ENCODE measurements at regions of chr6 and their contacts with region 1.

Region 1: DNA sequence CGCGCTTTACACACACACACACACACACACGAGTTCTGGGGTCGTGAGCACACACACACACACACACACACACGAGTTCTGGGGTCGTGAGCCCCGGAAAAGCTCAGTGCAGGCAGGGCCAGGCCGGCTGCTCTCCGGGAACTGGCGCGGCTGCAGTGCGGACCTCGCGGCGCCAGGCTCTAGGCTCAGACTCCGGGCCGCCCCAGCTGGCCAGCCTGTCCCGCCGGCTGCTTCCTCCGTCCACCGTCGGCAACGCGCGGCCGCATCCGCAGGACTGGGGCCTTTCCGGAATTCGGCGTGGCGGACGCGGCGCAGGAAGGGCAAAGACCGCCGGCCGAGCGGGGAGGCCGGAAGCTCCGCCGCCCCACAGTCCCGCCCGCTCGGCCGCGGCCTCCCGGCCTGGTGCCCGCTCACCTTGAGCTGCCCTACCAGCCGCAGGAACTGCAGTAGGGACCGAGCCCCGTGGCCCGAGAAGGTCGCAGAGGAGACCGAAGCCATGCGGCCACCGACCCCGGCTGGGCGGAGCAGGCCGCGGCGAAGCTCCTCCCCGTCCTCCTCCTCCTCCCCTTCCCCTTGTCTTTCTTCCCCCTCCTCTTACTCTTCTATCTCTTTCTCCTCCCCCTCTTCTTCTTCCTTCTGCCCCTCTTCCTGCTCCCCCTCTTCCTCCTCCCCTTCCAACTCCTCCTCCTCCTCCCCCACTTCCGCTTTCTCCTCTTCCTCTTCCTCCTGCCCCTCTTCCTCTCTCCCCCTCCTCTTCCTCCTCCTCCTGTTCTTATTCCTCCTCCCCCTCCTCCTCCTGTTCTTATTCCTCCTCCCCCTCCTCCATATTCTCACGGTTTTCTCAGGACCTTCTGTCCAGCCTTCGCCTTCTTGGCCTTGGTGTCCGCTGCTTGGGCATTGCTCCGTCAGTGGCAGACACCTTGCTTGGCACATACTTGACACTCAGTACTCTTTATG is at the start of gene HDDC2:
- DNase-seq: peak; percentile 84 to 91 (median 87)
- ATAC-seq: peak; percentile 65 to 93 (median 92)
- H3K4me3 ChIP-seq: peak within 1 kb of the TSS; percentile 46 to 84 (median 74)
- H3K27ac ChIP-seq: peak within 1 kb of the TSS; percentile 83 to 97 (median 92)
- H3K4me1 ChIP-seq: peaks cover 0 to 31% (median 21%) of the 10 kb centered on the region in 12 donors
- H3K27me3 ChIP-seq: no peaks in the 10 kb centered on the region
- CTCF ChIP-seq: no peak
- POLR2A ChIP-seq: peak in 1 of 2 donors; percentile 65
- total RNA-seq, gene HDDC2: 70.2 to 123 (median 92.6) TPM

Region 2: GRCh38 chr6:125197795-125198269 is 103.9 kb before region 1 on chr6:
- intact Hi-C with region 1: loop called in 2 of 10 experiments (anchors 2 to 5 kb)
- DNase-seq: peak; percentile 56 to 84 (median 71)
- ATAC-seq: peak; percentile 92 to 98 (median 94)
- H3K4me3 ChIP-seq: peak overlapping the region in 1 of 12 donors; percentile 4
- H3K27ac ChIP-seq: peak overlapping the region; percentile 59 to 91 (median 83)
- H3K4me1 ChIP-seq: peaks cover 0 to 70% (median 41%) of the 10 kb centered on the region in 12 donors
- H3K27me3 ChIP-seq: no peaks in the 10 kb centered on the region
- CTCF ChIP-seq: no peak
- POLR2A ChIP-seq: no peak

Region 3: DNA sequence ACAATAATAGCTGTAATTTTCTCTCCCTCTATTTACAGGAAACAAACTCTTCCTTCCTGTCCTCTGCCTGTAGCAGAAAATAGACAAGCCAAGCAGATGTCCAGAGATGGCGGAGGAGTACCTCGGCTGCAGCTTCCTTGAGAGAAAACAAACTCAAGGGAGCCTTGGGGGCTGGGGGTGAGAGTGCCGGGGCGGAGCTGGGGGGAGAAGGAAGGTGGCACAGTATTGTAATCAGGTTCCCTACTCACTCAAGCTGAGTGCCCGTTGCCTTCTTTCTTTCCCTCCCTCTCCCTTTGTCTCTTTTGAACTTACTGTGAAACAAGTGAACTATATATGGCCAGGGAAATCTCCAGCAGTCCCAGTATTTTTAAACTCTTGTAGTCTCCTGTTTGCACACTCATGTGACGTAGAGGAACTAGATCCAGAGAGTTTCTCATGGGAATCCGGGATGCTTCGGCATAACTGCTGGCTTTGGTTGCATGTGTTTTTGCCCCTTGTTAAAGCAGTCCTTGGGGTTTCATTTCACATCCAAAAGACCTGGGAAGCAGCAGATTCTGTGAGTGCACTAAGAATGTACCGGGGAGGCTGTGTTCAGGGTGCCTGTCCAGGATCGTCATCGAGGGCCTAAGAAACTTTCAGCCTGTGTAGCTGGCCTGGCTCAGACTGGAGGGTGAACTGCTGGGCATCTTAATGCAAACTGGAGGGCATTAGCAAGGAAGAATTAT is 44.6 kb after region 1 on chr6:
- intact Hi-C with region 1: no loop called
- DNase-seq: peak in 3 of 5 donors; percentile 22 to 43 (median 27)
- ATAC-seq: peak in 2 of 4 donors; percentile 38 to 78
- H3K4me3 ChIP-seq: peak overlapping the region in 8 of 12 donors; percentile 2 to 36 (median 27)
- H3K27ac ChIP-seq: peak overlapping the region in 11 of 12 donors; percentile 38 to 84 (median 54)
- H3K4me1 ChIP-seq: peaks cover 0 to 8% (median 0%) of the 10 kb centered on the region in 12 donors
- H3K27me3 ChIP-seq: no peaks in the 10 kb centered on the region
- CTCF ChIP-seq: no peak
- POLR2A ChIP-seq: no peak

Region 4: GRCh38 chr6:125986300-125987025 is 684.8 kb after region 1 on chr6 and contains the start of gene TRMT11:
- intact Hi-C with region 1: loop called in 1 of 10 experiments (anchors 10 kb)
- DNase-seq: peak; percentile 85 to 92 (median 91)
- ATAC-seq: peak; percentile 99
- H3K4me3 ChIP-seq: peak within 1 kb of the TSS; percentile 63 to 91 (median 80)
- H3K27ac ChIP-seq: peak within 1 kb of the TSS in 11 of 12 donors; percentile 58 to 86 (median 75)
- H3K4me1 ChIP-seq: peaks cover 0 to 21% (median 9%) of the 10 kb centered on the region in 12 donors
- H3K27me3 ChIP-seq: no peaks in the 10 kb centered on the region
- CTCF ChIP-seq: peak in 3 of 12 donors; percentile 17 to 21 (median 18)
- POLR2A ChIP-seq: peak in 1 of 2 donors; percentile 61
- total RNA-seq, gene TRMT11: 9.0 to 15.6 (median 11.8) TPM